SK-N-SH (cell line): ENCODE measurements at regions of chr7 and their contacts with region 1.

Region 1: DNA sequence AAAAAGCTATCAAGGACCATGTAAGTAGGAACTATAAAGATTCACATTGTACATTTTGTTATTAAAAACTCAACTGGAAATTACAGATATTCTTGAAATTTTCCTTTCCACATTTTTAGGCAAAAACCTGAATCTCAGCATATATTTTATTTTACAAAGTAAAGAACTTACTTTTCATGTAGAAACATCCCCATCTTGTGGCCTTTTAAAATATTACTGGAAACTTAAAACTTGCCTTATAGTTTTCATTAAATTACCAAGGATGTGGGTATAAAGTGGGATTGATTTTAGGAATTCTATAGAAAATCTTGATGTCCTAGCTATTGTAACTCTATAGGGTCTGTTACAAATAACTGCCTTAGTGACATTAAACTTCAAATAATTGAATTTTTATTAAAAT is 10.6 kb downstream of the DBF4 start:
- DNase-seq: peak; percentile 17
- H3K4me3 ChIP-seq: no peak overlapping the region; a peak in 1 of 4 replicates
- H3K27ac ChIP-seq: no peak overlapping the region; a peak in 1 of 4 replicates
- H3K4me1 ChIP-seq: peaks cover 0 to 5% of the 10 kb centered on the region in 2 experiments; a peak in 2 of 4 replicates
- H3K27me3 ChIP-seq: no peaks in the 10 kb centered on the region
- CTCF ChIP-seq: peak; percentile 80
- EP300 ChIP-seq: no peak
- RAD21 ChIP-seq: peak; percentile 75

Region 2: GRCh38 chr7:87495366-87495765 is 391.5 kb before region 1 on chr7:
- CTCF ChIA-PET with region 1: no interaction called
- POLR2A ChIA-PET with region 1: no interaction called
- DNase-seq: no peak
- H3K4me3 ChIP-seq: no peak overlapping the region
- H3K27ac ChIP-seq: no peak overlapping the region
- H3K4me1 ChIP-seq: no peaks in the 10 kb centered on the region
- H3K27me3 ChIP-seq: no peaks in the 10 kb centered on the region
- CTCF ChIP-seq: no peak
- EP300 ChIP-seq: no peak
- RAD21 ChIP-seq: no peak

Region 3: DNA sequence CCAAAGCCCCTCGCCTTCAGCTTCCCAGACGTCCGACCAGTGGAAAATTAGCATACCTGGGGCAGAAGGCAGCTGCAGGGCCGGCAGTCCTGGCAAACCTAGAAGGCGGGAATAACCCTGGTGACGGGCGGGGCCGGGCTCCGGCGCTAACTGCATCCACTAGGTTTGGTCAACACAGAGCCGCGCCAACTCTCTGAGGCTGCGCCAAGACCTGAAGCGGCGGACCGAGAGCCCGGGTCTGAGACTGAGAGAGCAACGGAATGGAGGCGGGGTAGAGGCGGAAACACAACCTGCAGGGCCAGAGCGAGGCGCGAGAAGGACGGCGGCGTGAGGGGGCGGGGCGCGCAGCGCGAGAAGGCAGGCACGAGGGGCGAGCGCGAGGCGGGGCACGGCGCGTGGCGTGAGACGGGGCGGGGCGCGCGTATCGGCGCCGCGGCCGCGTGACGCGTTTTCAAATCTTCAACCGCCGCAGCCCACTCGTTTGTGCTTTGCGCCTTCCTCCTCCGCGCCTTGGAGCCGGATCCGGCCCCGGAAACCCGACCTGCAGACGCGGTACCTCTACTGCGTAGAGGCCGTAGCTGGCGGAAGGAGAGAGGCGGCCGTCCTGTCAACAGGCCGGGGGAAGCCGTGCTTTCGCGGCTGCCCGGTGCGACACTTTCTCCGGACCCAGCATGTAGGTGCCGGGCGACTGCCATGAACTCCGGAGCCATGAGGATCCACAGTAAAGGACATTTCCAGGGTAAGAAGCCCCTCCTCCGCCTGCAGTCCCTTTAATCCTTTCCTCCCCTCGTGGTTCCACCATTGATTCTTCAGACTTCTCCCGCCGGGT is 10.6 kb before region 1 on chr7 and contains the starts of genes DBF4 and SLC25A40:
- CTCF ChIA-PET with region 1: interaction called, 16 read pairs
- POLR2A ChIA-PET with region 1: no interaction called
- DNase-seq: peak; percentile 97
- H3K4me3 ChIP-seq: peak within 1 kb of the TSS; percentile 92
- H3K27ac ChIP-seq: peak within 1 kb of the TSS; percentile 85 to 95
- H3K4me1 ChIP-seq: peaks cover 0 to 13% of the 10 kb centered on the region in 2 experiments; a peak in 1 of 4 replicates
- H3K27me3 ChIP-seq: no peaks in the 10 kb centered on the region
- CTCF ChIP-seq: no peak; the same call in 1 of the 2 replicates
- EP300 ChIP-seq: peak; percentile 4 to 34; a peak in 1 of 4 replicates
- RAD21 ChIP-seq: no peak
- polyA plus RNA-seq, gene DBF4: 5.1 and 7.6 TPM in 2 replicates
- polyA plus RNA-seq, gene SLC25A40: 5.5 and 8.5 TPM in 2 replicates

Region 4: DNA sequence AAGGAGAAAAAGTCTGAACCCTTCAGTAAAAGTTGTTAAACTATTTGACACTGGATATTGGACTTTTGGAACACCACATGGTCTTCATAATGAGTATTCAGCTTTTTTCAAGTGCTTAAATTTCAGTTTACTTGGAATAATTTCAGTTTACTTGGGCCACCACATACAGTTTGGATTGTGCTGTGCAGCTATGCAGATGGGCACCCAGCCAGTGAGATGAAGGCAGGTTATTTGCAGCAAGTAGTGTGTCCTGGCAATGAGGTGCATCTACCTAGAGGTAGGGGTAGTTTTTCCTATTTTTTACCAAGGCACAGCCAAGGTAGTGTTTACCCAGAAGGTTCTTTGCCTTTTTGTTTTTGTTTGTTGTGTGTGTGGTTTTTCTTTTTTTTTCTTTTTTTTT is 23.3 kb after region 1 on chr7:
- CTCF ChIA-PET with region 1: interaction called, 10 read pairs
- POLR2A ChIA-PET with region 1: no interaction called
- DNase-seq: no peak
- H3K4me3 ChIP-seq: no peak overlapping the region
- H3K27ac ChIP-seq: no peak overlapping the region
- H3K4me1 ChIP-seq: no peaks in the 10 kb centered on the region; a peak in 1 of 4 replicates
- H3K27me3 ChIP-seq: no peaks in the 10 kb centered on the region
- CTCF ChIP-seq: no peak
- EP300 ChIP-seq: no peak
- RAD21 ChIP-seq: no peak

Region 5: GRCh38 chr7:88233828-88234227 is 347.0 kb after region 1 on chr7:
- CTCF ChIA-PET with region 1: no interaction called
- POLR2A ChIA-PET with region 1: no interaction called
- DNase-seq: no peak
- H3K4me3 ChIP-seq: no peak overlapping the region
- H3K27ac ChIP-seq: no peak overlapping the region
- H3K4me1 ChIP-seq: no peaks in the 10 kb centered on the region
- H3K27me3 ChIP-seq: no peaks in the 10 kb centered on the region; the same call in 1 of the 2 replicates
- CTCF ChIP-seq: no peak
- EP300 ChIP-seq: no peak
- RAD21 ChIP-seq: no peak